ENCODE measurements at regions of chr1 and their contacts with region 1.

Region 1: GRCh38 chr1:205273551-205273982 is 45.8 kb downstream of the TMCC2 start:
- DNase-seq: peak; percentile 92
- ATAC-seq: peak; percentile 90
- H3K4me3 Mint-ChIP-seq: no peak overlapping the region
- H3K27ac Mint-ChIP-seq: no peak overlapping the region
- H3K4me1 Mint-ChIP-seq: peaks cover 35% of the 10 kb centered on the region
- H3K27me3 Mint-ChIP-seq: no peaks in the 10 kb centered on the region

Region 2: DNA sequence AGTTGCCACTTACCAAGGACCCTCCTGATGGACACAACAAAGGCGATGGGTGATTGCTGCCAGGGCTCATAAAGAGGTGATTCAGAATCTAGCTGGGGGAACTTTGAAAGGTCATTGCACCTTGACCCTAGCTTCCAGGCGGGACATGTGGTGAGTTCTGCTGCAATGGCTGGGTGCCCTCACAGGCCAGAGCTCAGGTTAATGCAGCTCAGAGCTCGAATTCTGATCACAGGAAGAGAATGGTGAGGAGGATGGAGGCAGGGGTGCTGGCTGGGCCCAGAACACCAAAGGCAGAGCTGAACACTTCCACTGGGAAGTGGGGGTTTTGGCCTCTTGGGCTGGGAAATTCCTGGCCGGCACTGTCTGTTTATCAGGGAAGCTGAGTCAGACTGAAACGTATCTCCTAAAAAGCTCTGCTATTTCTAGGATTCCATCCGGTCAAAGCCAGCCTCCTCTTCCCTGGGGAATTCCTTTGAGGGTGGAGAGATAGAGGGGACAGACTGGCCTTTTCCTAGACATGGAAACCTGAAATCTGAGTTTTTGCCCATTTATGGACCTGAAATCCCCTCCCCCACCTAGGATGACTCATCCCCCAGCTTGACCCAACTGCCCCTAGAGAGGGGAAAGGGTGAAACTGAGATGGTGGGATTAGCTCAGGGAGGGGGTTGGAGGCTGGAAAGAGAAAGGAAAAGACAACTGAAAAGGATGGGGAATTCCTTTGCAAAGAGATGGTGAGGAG is 20.8 kb after region 1 on chr1:
- CTCF ChIA-PET with region 1: interaction called, 18 read pairs
- POLR2A ChIA-PET with region 1: interaction called, 4 read pairs
- intact Hi-C with region 1: no loop called
- DNase-seq: no peak
- ATAC-seq: no peak
- H3K4me3 Mint-ChIP-seq: no peak overlapping the region
- H3K27ac Mint-ChIP-seq: peak overlapping the region; percentile 33
- H3K4me1 Mint-ChIP-seq: peaks cover 49% of the 10 kb centered on the region
- H3K27me3 Mint-ChIP-seq: no peaks in the 10 kb centered on the region

Region 3: DNA sequence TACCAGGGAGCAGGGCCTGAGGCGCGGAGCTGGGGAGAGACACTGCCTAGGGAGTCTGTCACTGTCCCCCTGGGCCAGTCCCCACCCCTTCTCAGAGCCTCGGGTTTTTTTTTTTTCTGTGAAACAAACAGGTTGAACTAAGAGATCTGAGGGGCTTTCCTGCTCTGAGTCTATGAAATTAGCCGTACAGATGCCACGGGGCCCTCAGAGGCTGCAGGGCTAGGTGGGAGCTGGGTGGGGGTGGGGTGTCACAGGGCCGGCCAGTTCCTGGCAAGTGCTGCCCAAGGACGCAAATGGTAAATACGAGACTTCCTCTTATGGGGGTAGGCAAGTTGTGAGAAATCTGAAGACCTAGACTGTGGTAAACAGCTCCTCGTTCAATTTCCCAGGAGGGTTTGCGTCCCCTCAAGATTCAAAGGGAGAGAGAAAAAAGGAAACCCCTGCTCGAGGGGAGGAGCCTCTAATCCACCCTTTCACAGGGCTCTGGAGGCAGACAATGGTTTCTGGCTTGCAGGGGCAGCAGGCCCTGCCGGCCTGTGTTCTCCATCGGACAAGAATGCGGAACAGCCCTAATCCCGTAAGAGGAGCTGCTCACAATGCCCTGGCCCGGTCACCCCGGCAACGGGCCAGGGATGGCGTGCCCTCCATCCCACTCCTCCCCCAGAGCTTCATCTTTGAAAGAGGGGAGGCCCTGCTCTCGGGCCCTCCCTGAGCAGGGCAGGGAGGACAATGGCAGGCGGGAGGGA is 40.2 kb after region 1 on chr1:
- CTCF ChIA-PET with region 1: interaction called, 760 read pairs
- POLR2A ChIA-PET with region 1: no interaction called
- intact Hi-C with region 1: no loop called
- DNase-seq: peak; percentile 59
- ATAC-seq: peak; percentile 80
- H3K4me3 Mint-ChIP-seq: peak overlapping the region; percentile 76
- H3K27ac Mint-ChIP-seq: peak overlapping the region; percentile 93
- H3K4me1 Mint-ChIP-seq: peaks cover 78% of the 10 kb centered on the region
- H3K27me3 Mint-ChIP-seq: no peaks in the 10 kb centered on the region

Region 4: GRCh38 chr1:205321164-205321958 is 47.8 kb after region 1 on chr1 and contains the start of gene NUAK2:
- CTCF ChIA-PET with region 1: interaction called, 760 read pairs
- POLR2A ChIA-PET with region 1: interaction called, 13 read pairs
- intact Hi-C with region 1: loop called (anchors 1 kb)
- DNase-seq: peak; percentile 90
- ATAC-seq: peak; percentile 85
- H3K4me3 Mint-ChIP-seq: peak within 1 kb of the TSS; percentile 88
- H3K27ac Mint-ChIP-seq: peak within 1 kb of the TSS; percentile 90
- H3K4me1 Mint-ChIP-seq: peaks cover 65% of the 10 kb centered on the region
- H3K27me3 Mint-ChIP-seq: no peaks in the 10 kb centered on the region
- total RNA-seq, gene NUAK2: 2.3 to 2.7 TPM

Region 5: DNA sequence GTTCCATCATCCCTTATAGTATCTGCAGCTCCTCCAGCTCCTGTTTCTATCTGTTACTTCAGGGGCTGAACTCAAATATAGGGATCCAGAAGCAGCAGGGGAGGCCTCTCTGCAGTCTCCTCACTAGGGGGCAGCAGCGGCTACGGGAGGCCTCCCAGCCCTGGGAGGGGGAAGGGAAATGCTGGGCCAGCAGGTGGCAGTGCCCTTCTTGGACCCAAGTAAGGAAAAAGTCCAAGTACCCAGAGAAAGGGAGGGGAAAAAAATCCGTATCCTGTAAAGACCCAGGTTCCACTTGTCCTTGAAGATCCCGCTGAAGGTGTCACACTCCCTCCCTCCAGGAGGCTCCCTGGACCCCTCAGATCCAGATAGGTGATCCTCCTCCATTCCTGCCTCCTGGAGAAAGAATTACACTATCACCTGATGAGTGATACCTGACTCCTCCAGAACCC is 62.1 kb after region 1 on chr1:
- CTCF ChIA-PET with region 1: interaction called, 760 read pairs
- POLR2A ChIA-PET with region 1: no interaction called
- intact Hi-C with region 1: no loop called
- DNase-seq: peak; percentile 92
- ATAC-seq: peak; percentile 96
- H3K4me3 Mint-ChIP-seq: no peak overlapping the region
- H3K27ac Mint-ChIP-seq: no peak overlapping the region
- H3K4me1 Mint-ChIP-seq: no peaks in the 10 kb centered on the region
- H3K27me3 Mint-ChIP-seq: no peaks in the 10 kb centered on the region